Right ventricle myocardium inferior (tissue), 1 donor: ENCODE measurements at regions of chr2 and their contacts with region 1.

Region 1: DNA sequence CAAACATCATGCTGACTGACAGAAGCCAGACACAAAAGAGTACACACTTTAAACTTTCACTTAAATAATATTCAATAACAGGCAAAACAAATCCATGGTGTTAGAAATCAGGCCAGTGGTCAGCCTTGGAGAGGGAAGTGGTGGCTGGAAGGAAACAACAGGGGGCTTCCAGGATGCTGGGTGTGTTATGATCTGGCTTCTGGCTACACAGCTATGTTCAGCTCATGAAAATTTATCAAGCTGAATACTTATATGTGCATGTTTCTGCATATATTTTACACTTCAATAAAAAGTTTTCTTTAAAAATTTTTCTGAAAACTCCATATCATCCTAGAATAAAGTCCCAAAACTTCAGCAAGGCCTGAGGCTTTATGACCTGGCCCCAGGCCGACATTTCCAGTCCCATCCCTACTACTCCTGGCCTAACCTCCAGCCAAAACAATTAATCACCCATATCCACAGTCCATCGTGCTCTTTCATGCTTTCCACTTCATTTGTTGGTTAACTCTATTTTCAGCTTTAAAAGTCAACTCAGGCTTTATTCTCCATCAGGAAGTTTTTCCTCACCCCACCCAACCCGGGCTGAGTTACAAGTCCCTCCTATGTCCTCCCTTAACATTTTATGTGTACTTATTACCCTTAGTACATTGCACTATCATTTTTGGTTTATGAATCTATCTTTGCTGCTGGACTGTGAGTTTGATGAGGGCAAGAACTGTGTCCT is 27.9 kb upstream of the SPTBN1 start:
- DNase-seq: no peak
- ATAC-seq: peak; percentile 49

Region 2: DNA sequence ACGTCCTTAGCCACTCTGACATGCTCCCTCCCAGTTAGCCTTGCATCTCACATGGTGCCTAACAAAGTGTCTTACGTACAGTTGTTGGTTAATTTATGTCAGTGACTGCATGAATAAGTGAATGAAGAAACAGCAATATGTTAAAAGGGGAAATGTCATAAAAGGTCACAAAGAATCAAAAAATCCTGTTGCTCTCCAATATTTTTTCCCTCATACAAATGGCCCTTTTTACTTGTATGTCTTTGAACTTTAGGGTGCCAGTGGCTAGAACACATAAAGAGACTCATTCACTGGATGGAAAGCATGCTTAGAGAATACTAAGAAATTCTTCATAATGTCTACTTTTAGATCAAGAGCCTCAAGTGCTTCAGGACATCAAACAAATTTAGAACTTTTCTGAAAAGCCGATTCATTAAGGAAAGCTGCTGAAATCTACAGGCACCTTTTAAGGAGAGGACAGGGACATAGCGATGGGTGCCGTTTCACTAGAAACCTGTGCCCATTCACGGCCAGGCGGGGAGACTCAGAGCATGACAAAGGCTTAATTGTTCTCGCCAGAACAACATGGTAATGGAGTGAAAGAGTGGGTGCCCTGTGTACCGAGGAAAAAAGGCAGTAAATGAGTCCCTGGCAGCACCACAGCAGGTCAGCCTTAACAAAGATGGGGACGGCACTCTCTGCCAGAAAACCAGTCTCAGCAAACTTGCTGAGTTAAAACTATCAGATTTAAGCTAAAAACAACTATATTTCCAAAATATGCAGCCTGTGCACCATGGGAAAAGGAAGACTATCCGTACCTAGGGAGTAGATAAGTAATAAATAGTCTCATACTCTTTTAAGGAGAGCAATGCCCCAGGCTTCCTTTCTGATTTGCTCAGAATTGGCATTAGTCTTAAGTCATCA is 43.7 kb before region 1 on chr2:
- intact Hi-C with region 1: loop called (anchors 5 kb)
- DNase-seq: no peak
- ATAC-seq: no peak